ENCODE measurements at regions of chr1 and their contacts with region 1.

Region 1: GRCh38 chr1:220335668-220336067 is 63.4 kb upstream of the RAB3GAP2 start:
- DNase-seq: peak; percentile 94
- H3K4me3 Mint-ChIP-seq: no peak overlapping the region
- H3K27ac Mint-ChIP-seq: peak overlapping the region; percentile 84
- H3K4me1 Mint-ChIP-seq: peaks cover 32% of the 10 kb centered on the region
- H3K27me3 Mint-ChIP-seq: no peaks in the 10 kb centered on the region
- CTCF ChIP-seq: no peak

Region 2: DNA sequence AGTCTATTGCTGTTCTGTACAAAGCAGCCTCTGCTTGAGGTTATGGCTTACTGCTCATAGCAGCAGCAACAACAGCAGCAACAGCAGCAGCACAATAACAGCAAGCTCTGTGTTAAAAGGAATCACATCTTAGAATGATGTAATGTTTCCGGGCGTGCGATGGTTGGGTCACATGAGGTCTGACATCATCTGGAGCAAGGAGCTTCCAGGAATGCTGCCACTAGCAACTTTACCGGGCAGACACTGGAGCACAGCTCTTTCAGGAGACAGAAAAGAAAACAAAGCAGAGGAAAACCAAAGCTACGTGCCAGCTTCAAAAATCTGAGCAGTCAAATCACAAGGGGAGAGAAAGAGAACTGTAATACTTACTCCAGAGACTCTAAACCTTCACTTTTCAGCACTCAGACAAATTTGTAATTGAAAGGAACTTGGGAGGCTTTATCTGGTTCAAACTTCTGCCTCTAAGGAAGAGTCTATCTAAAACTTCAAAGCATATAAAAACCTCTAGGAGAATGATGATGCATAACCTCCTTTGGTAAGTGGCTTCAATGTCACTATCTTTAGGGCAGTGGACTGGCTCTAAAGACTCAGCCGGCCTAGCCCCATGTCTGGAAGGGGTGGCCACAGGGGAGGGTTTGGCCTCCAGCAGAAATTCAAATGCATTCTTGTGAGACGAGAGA is 35.1 kb before region 1 on chr1:
- CTCF ChIA-PET with region 1: interaction called, 37 read pairs
- POLR2A ChIA-PET with region 1: interaction called, 71 read pairs
- intact Hi-C with region 1: loop called (anchors 1 kb)
- DNase-seq: peak; percentile 91
- H3K4me3 Mint-ChIP-seq: peak overlapping the region; percentile 25
- H3K27ac Mint-ChIP-seq: peak overlapping the region; percentile 85
- H3K4me1 Mint-ChIP-seq: peaks cover 13% of the 10 kb centered on the region
- H3K27me3 Mint-ChIP-seq: no peaks in the 10 kb centered on the region
- CTCF ChIP-seq: no peak

Region 3: GRCh38 chr1:220347654-220348175 is 12.0 kb after region 1 on chr1:
- CTCF ChIA-PET with region 1: interaction called, 4 read pairs
- POLR2A ChIA-PET with region 1: interaction called, 16 read pairs
- intact Hi-C with region 1: no loop called
- DNase-seq: peak; percentile 84
- H3K4me3 Mint-ChIP-seq: no peak overlapping the region
- H3K27ac Mint-ChIP-seq: no peak overlapping the region
- H3K4me1 Mint-ChIP-seq: peaks cover 21% of the 10 kb centered on the region
- H3K27me3 Mint-ChIP-seq: no peaks in the 10 kb centered on the region
- CTCF ChIP-seq: no peak

Region 4: GRCh38 chr1:220363196-220363837 is 27.6 kb after region 1 on chr1:
- CTCF ChIA-PET with region 1: interaction called, 4 read pairs
- POLR2A ChIA-PET with region 1: interaction called, 43 read pairs
- intact Hi-C with region 1: no loop called
- DNase-seq: peak; percentile 39
- H3K4me3 Mint-ChIP-seq: no peak overlapping the region
- H3K27ac Mint-ChIP-seq: no peak overlapping the region
- H3K4me1 Mint-ChIP-seq: peaks cover 6% of the 10 kb centered on the region
- H3K27me3 Mint-ChIP-seq: no peaks in the 10 kb centered on the region
- CTCF ChIP-seq: no peak

Region 5: DNA sequence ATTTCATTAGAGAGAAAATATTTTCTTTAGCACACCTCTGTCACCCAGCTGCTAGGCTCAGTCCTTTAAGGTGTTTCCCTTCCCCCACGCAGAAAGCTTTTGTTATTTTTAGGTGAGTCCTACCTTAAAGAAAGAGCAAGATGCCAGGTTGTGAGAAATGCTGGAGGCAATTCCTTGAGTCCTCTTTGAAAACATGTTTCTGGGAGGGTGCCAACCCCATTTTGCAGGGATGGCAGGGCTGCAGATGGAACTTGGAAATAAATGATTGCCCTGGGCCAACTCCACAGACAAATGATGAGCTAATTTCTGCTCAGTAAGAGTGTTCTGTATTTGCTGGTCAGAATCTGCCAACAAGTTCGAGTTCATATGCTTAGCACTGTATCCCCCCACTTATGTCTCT is 55.8 kb after region 1 on chr1:
- CTCF ChIA-PET with region 1: interaction called, 4 read pairs
- POLR2A ChIA-PET with region 1: interaction called, 25 read pairs
- intact Hi-C with region 1: no loop called
- DNase-seq: peak; percentile 97
- H3K4me3 Mint-ChIP-seq: no peak overlapping the region
- H3K27ac Mint-ChIP-seq: no peak overlapping the region
- H3K4me1 Mint-ChIP-seq: peaks cover 33% of the 10 kb centered on the region
- H3K27me3 Mint-ChIP-seq: peaks cover 10% of the 10 kb centered on the region
- CTCF ChIP-seq: no peak

Measured in MCF 10A (cell line).